ENCODE measurements at regions of chr7 and their contacts with region 1.

Region 1: DNA sequence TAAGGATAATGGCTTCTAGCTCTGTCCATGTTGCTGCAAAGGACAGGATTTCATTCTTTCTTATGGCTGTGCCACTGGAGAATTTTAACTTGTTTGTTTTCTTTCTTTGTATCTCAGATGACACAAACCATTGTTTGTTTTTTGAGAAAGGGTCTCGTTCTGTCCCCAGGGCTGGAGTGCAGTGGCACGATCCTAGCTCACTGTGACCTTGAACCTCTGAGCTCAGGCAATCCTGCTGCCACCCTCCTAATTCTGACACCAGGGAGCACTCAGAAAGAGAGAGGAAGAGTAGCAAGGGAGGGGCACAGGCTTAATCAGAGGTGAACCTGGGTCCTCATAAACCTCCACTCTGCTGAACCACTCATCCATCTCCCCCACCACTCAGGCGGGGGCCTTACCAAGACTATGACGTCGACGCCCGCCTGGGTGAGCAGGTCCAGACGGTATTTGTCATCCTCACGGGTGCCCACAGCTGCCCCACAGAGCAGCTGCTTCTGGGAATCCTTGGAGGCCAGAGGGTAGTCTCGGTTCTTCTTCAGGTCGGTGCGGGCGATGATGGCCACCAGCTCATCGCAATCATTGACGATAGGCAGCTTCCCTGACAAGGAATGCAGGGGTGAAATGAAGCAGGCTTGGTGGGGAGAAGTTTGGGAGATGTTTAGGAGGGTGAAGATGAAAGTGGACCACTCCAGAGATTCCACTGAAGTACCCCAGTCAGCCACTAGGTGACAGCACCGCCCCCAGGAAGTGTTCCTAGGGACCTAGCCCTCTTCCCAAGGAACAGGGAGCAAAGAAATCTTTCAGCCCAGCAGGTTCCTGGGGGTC is 11.6 kb downstream of the IMPDH1 start:
- DNase-seq: no peak
- H3K4me3 ChIP-seq: no peak overlapping the region
- H3K27ac ChIP-seq: no peak overlapping the region
- H3K4me1 ChIP-seq: no peaks in the 10 kb centered on the region
- H3K27me3 ChIP-seq: no peaks in the 10 kb centered on the region
- CTCF ChIP-seq: peak; percentile 92 to 99 (median 95)
- EP300 ChIP-seq: no peak
- POLR2A ChIP-seq: no peak

Region 2: GRCh38 chr7:127810696-127811660 is 587.2 kb before region 1 on chr7:
- intact Hi-C with region 1: no loop called
- DNase-seq: no peak
- H3K4me3 ChIP-seq: no peak overlapping the region
- H3K27ac ChIP-seq: no peak overlapping the region
- H3K4me1 ChIP-seq: peaks cover 0 to 10% (median 5%) of the 10 kb centered on the region in 4 donors
- H3K27me3 ChIP-seq: no peaks in the 10 kb centered on the region
- CTCF ChIP-seq: no peak
- EP300 ChIP-seq: no peak
- POLR2A ChIP-seq: no peak

Region 3: DNA sequence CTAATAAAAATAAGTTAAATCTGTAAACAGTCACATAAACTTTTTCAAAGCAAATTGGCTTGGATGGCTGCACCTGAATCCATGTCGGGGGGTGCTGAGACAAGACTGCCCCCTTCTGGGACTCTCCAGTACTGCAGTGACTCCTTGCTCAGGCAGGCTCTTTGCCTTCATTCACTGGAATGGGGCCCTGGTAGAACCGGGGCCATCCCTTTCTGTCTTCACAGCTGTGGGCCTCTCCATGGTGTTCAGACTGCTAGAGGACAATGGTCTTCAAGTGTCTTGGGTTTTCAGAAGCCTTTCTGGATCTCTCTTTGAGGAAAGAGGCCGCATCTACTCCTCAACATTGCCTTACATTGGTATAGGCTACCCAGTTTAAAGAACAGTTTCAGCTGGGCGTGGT is 27.6 kb after region 1 on chr7:
- intact Hi-C with region 1: loop called (anchors 1 kb)
- DNase-seq: no peak
- H3K4me3 ChIP-seq: no peak overlapping the region
- H3K27ac ChIP-seq: no peak overlapping the region
- H3K4me1 ChIP-seq: peaks cover 0 to 12% (median 5%) of the 10 kb centered on the region in 4 donors
- H3K27me3 ChIP-seq: peaks cover 0 to 11% (median 0%) of the 10 kb centered on the region in 4 donors
- CTCF ChIP-seq: peak; percentile 91 to 98 (median 93)
- EP300 ChIP-seq: no peak
- POLR2A ChIP-seq: no peak

Region 4: GRCh38 chr7:128783143-128783861 is 385.1 kb after region 1 on chr7:
- intact Hi-C with region 1: no loop called
- DNase-seq: peak; percentile 94
- H3K4me3 ChIP-seq: no peak overlapping the region
- H3K27ac ChIP-seq: peak overlapping the region; percentile 86 to 88 (median 87)
- H3K4me1 ChIP-seq: peaks cover 11 to 36% (median 35%) of the 10 kb centered on the region in 4 donors
- H3K27me3 ChIP-seq: no peaks in the 10 kb centered on the region
- CTCF ChIP-seq: no peak
- EP300 ChIP-seq: no peak
- POLR2A ChIP-seq: no peak